Sigmoid colon (tissue), 7 donors: ENCODE measurements at regions of chr10 and their contacts with region 1.

Region 1: DNA sequence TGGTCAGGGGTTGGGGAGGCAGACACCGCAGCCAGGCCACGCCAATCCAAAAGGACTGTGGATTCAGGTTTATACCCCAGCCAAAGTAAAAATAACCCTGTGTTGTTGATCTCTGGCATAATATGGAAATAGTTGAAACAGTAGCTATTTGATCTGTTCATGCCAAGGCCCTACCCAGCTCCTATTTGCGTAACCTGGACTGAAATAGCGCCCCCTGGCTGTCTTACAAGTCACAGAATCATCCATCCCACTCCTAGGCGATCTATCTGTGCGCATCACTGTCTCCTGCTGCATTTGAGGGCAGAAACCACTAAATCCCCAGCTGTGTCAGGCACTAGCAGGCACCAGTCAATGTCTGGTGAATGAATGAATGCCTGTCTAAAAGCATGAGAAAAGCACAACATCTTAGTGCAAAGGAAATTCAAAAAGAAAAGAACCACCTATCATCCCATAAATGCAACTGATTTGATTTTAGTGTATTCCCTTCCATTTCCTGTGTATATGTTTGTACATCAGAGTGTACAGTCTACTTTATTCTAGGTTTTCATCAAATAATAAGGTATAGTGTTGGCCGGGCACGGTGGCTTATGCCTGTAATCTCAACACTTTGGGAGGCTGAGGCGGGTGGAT is 160.0 kb downstream of the SLIT1 start:
- DNase-seq: peak; percentile 63
- H3K4me3 ChIP-seq: no peak overlapping the region
- H3K27ac ChIP-seq: no peak overlapping the region
- H3K4me1 ChIP-seq: peaks cover 0 to 31% (median 26%) of the 10 kb centered on the region in 4 donors
- H3K27me3 ChIP-seq: no peaks in the 10 kb centered on the region
- CTCF ChIP-seq: peak in 3 of 4 experiments; percentile 50 to 56 (median 52)
- EP300 ChIP-seq: no peak
- POLR2A ChIP-seq: no peak

Region 2: GRCh38 chr10:96765406-96766240 is 260.1 kb before region 1 on chr10:
- intact Hi-C with region 1: loop called (anchors 10 kb)
- DNase-seq: peak; percentile 74
- H3K4me3 ChIP-seq: no peak overlapping the region
- H3K27ac ChIP-seq: no peak overlapping the region
- H3K4me1 ChIP-seq: no peaks in the 10 kb centered on the region
- H3K27me3 ChIP-seq: no peaks in the 10 kb centered on the region
- CTCF ChIP-seq: peak; percentile 42 to 81 (median 74)
- EP300 ChIP-seq: no peak
- POLR2A ChIP-seq: no peak

Region 3: GRCh38 chr10:96858038-96858705 is 167.6 kb before region 1 on chr10:
- intact Hi-C with region 1: no loop called
- DNase-seq: no peak
- H3K4me3 ChIP-seq: no peak overlapping the region
- H3K27ac ChIP-seq: no peak overlapping the region
- H3K4me1 ChIP-seq: peaks cover 0 to 34% (median 27%) of the 10 kb centered on the region in 4 donors
- H3K27me3 ChIP-seq: no peaks in the 10 kb centered on the region
- CTCF ChIP-seq: no peak
- EP300 ChIP-seq: no peak
- POLR2A ChIP-seq: no peak

Region 4: DNA sequence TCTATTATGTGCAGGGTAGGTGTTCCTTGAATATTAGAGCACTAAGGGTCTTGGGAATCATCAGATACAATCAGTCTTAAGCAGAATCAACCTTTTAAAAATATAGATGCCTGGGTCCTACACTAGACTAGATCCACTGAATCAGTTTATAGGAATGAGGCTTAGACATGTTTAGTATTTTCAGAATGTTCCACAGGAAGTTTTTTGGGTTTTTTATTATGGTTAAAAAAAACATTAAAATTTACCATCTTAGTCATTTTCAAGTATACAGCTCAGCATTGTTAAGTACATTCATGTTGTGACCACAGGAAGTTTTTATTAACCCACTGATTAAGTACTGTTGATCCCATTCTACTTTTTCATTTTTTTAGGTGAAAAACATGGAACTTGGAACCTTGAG is 57.9 kb before region 1 on chr10:
- intact Hi-C with region 1: no loop called
- DNase-seq: no peak
- H3K4me3 ChIP-seq: no peak overlapping the region
- H3K27ac ChIP-seq: no peak overlapping the region
- H3K4me1 ChIP-seq: peaks cover 0 to 3% (median 1%) of the 10 kb centered on the region in 4 donors
- H3K27me3 ChIP-seq: no peaks in the 10 kb centered on the region
- CTCF ChIP-seq: no peak
- EP300 ChIP-seq: no peak
- POLR2A ChIP-seq: no peak